ENCODE measurements at regions of chr11 and their contacts with region 1.

Region 1: DNA sequence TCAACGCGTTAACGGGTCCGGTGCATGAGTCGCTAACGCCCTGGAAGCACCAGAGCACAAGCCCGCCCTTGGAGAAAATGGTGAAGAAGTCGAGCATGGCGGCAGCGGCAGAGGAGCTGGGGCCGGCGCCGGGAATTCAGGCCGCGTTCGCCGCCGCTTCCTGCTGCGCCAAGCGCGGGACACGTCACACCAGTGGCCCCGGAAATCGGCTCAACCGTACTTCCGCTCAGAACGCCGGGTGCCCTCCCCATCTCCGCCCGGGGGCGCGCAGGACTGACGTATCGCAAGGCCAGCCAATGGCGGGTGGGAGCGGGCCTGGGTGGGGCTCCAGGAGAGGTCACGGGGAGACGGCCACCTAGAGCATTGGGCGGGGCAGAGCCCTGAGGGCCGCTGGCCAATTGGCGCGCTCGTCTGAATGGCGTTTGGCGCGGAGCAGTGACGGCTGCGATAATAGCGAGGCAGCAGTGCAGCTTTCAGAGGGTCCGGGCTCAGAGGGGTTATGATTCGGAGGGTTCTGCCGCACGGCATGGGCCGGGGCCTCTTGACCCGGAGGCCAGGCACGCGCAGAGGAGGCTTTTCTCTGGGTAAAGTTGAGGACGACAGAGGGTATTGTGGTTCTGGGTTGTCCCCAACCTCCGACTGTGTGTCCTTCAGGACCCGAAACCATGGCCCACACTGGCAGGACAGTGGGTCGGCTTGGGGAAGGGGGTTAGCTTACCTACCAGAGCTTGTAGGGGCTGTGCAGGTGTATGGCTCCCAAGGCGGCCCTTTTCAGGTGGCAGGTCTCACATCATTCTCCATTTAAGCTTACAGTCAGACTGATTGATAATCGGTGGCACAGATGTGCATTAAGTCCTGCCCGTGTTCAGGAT is at the starts of genes FOXRED1 and SRPRA:
- DNase-seq: peak; percentile 99 to 100 (median 100)
- ATAC-seq: peak; percentile 99
- H3K4me3 ChIP-seq: peak within 1 kb of the TSS; percentile 90 to 98
- H3K4me3 Mint-ChIP-seq: peak within 1 kb of the TSS; percentile 96
- H3K27ac ChIP-seq: peak within 1 kb of the TSS; percentile 90 to 94
- H3K27ac Mint-ChIP-seq: peak within 1 kb of the TSS; percentile 98
- H3K4me1 ChIP-seq: peaks cover 24% of the 10 kb centered on the region
- H3K4me1 Mint-ChIP-seq: peaks cover 39% of the 10 kb centered on the region
- H3K27me3 ChIP-seq: no peaks in the 10 kb centered on the region
- H3K27me3 Mint-ChIP-seq: no peaks in the 10 kb centered on the region
- CTCF ChIP-seq: no peak
- total RNA-seq, gene FOXRED1: 27.4 to 30.5 TPM
- total RNA-seq, gene SRPRA: 234 to 242 TPM

Region 2: GRCh38 chr11:125568970-125569914 is 699.7 kb before region 1 on chr11 and contains the start of gene EI24:
- CTCF ChIA-PET with region 1: no interaction called
- POLR2A ChIA-PET with region 1: no interaction called
- intact Hi-C with region 1: loop called in 1 of 2 experiments (anchors 5 kb)
- DNase-seq: peak; percentile 71 to 95 (median 86)
- ATAC-seq: peak; percentile 95
- H3K4me3 ChIP-seq: peak within 1 kb of the TSS; percentile 81 to 92
- H3K4me3 Mint-ChIP-seq: peak within 1 kb of the TSS; percentile 93
- H3K27ac ChIP-seq: peak within 1 kb of the TSS; percentile 80 to 82
- H3K27ac Mint-ChIP-seq: peak within 1 kb of the TSS; percentile 95
- H3K4me1 ChIP-seq: peaks cover 16% of the 10 kb centered on the region
- H3K4me1 Mint-ChIP-seq: peaks cover 37% of the 10 kb centered on the region
- H3K27me3 ChIP-seq: no peaks in the 10 kb centered on the region
- H3K27me3 Mint-ChIP-seq: no peaks in the 10 kb centered on the region
- CTCF ChIP-seq: peak; percentile 60
- total RNA-seq, gene EI24: 20.5 to 22.4 TPM

Region 3: DNA sequence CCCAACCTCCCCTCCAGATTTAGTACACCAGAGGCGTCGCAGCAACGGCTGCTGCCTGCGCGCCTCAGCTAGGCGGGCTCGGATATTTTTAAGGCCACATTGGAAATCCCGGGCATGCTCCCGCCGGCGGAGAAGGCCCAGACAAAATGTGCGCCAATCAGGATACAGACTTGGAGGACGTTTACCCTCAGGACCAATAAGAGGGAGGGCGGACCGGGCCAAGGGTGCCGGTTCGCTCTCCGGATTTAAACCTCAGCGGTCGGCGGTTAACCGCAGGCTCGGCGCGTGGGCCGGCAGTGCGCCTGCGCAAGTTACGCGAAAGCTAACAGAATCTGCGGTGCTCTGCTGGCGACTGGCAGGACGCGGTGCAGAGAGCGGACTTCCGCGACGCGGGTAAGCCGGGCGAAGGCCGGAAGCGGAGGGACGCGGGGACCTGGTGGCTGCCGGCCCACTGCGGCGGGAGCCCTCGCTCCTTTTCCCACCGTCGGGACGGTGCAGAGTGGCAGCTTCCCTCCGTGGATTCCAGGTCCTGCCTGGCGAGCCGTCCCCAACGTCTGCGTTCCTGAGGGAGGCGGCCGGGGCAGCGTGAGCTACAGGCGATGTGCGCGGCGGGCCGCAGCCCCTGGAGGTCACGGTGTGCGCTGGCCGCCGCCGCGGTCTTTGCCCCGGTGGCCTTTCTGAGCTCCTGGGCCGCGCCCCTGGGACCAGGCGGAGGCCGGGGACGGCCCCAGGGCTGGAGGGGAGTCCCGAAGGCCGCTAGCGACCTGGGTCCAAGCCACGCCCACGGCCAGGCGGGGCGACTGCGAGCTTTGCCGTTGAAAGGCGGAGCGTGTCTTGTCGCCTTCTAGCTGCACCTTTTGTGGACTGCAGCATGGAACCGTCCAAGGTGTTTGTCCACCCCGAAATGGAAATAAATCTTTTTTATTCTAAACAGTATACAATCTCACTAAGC is 381.3 kb before region 1 on chr11 and contains the start of gene HYLS1:
- CTCF ChIA-PET with region 1: no interaction called
- POLR2A ChIA-PET with region 1: no interaction called
- intact Hi-C with region 1: loop called in 1 of 2 experiments (anchors 5 kb)
- DNase-seq: peak; percentile 87 to 97 (median 94)
- ATAC-seq: peak; percentile 88
- H3K4me3 ChIP-seq: peak within 1 kb of the TSS; percentile 81 to 84
- H3K4me3 Mint-ChIP-seq: peak within 1 kb of the TSS; percentile 88
- H3K27ac ChIP-seq: peak within 1 kb of the TSS; percentile 61 to 87
- H3K27ac Mint-ChIP-seq: peak within 1 kb of the TSS; percentile 87
- H3K4me1 ChIP-seq: peaks cover 10% of the 10 kb centered on the region
- H3K4me1 Mint-ChIP-seq: peaks cover 31% of the 10 kb centered on the region
- H3K27me3 ChIP-seq: no peaks in the 10 kb centered on the region
- H3K27me3 Mint-ChIP-seq: no peaks in the 10 kb centered on the region
- CTCF ChIP-seq: no peak
- total RNA-seq, gene HYLS1: 1.1 to 1.2 TPM

Region 4: GRCh38 chr11:126062679-126063506 is 206.1 kb before region 1 on chr11 and contains the start of gene CDON:
- CTCF ChIA-PET with region 1: no interaction called
- POLR2A ChIA-PET with region 1: no interaction called
- intact Hi-C with region 1: loop called in 1 of 2 experiments (anchors 5 kb)
- DNase-seq: peak; percentile 78 to 95 (median 89)
- ATAC-seq: peak; percentile 89
- H3K4me3 ChIP-seq: peak within 1 kb of the TSS; percentile 60 to 91
- H3K4me3 Mint-ChIP-seq: peak within 1 kb of the TSS; percentile 91
- H3K27ac ChIP-seq: peak within 1 kb of the TSS; percentile 80 to 90
- H3K27ac Mint-ChIP-seq: peak within 1 kb of the TSS; percentile 95
- H3K4me1 ChIP-seq: peaks cover 13% of the 10 kb centered on the region
- H3K4me1 Mint-ChIP-seq: peaks cover 13% of the 10 kb centered on the region
- H3K27me3 ChIP-seq: no peaks in the 10 kb centered on the region
- H3K27me3 Mint-ChIP-seq: peaks cover 4% of the 10 kb centered on the region
- CTCF ChIP-seq: no peak
- total RNA-seq, gene CDON: 1.00 to 1.1 TPM

Region 5: GRCh38 chr11:126303623-126304456 is 34.9 kb after region 1 on chr11 and contains the start of gene DCPS:
- CTCF ChIA-PET with region 1: no interaction called
- POLR2A ChIA-PET with region 1: interaction called, 6 read pairs
- intact Hi-C with region 1: loop called (anchors 1 kb)
- DNase-seq: peak; percentile 66 to 92 (median 84)
- ATAC-seq: peak; percentile 96
- H3K4me3 ChIP-seq: peak within 1 kb of the TSS; percentile 93 to 97
- H3K4me3 Mint-ChIP-seq: peak within 1 kb of the TSS; percentile 88
- H3K27ac ChIP-seq: peak within 1 kb of the TSS; percentile 92 to 94
- H3K27ac Mint-ChIP-seq: peak within 1 kb of the TSS; percentile 89
- H3K4me1 ChIP-seq: peaks cover 21% of the 10 kb centered on the region
- H3K4me1 Mint-ChIP-seq: peaks cover 35% of the 10 kb centered on the region
- H3K27me3 ChIP-seq: no peaks in the 10 kb centered on the region
- H3K27me3 Mint-ChIP-seq: no peaks in the 10 kb centered on the region
- CTCF ChIP-seq: no peak
- total RNA-seq, gene DCPS: 7.3 to 7.5 TPM

Region 6: GRCh38 chr11:127709960-127710359 is 1441.0 kb after region 1 on chr11:
- CTCF ChIA-PET with region 1: no interaction called
- POLR2A ChIA-PET with region 1: no interaction called
- intact Hi-C with region 1: no loop called
- DNase-seq: no peak
- ATAC-seq: no peak
- H3K4me3 ChIP-seq: no peak overlapping the region
- H3K4me3 Mint-ChIP-seq: no peak overlapping the region
- H3K27ac ChIP-seq: no peak overlapping the region
- H3K27ac Mint-ChIP-seq: no peak overlapping the region
- H3K4me1 ChIP-seq: no peaks in the 10 kb centered on the region
- H3K4me1 Mint-ChIP-seq: no peaks in the 10 kb centered on the region
- H3K27me3 ChIP-seq: no peaks in the 10 kb centered on the region
- H3K27me3 Mint-ChIP-seq: no peaks in the 10 kb centered on the region
- CTCF ChIP-seq: no peak